Ascending aorta (tissue), 2 donors: ENCODE measurements at regions of chr11 and their contacts with region 1.

Region 1: GRCh38 chr11:66835768-66836405 is 7.4 kb upstream of the RCE1 start:
- DNase-seq: no peak
- H3K4me3 ChIP-seq: no peak overlapping the region
- H3K27ac ChIP-seq: no peak overlapping the region
- H3K4me1 ChIP-seq: no peaks in the 10 kb centered on the region
- H3K27me3 ChIP-seq: no peaks in the 10 kb centered on the region
- CTCF ChIP-seq: no peak

Region 2: DNA sequence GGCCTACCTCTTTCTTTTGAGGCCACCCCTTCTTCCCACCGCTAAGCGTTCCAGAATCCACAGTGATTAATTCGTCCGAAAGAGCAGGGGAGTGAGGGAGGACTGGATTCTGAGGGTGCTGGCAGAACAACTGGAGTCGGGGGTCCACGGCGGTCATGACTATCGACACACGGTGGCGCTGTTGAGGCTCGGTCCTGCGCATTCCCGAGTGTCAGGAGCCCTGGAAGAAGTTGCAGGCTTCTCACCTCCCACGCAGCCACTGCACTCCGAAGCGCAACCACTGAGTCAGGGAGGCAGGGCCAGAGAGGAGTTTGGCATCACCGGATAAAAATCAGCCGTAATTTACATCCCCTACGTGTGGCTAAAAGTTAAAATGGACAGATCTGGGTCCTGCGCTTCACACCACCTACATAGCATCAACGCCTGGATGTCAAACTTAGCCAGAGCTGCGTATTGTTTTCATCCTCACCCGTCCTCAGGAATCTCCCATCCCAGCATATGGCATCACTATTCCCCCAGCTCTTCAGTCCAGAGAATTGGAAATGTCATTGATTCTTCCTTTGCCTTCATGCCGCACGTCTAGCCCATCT is 256.8 kb before region 1 on chr11:
- intact Hi-C with region 1: loop called (anchors 2 kb)
- DNase-seq: peak; percentile 25 to 88
- H3K4me3 ChIP-seq: peak overlapping the region in 1 of 2 donors; percentile 26
- H3K27ac ChIP-seq: no peak overlapping the region
- H3K4me1 ChIP-seq: no peaks in the 10 kb centered on the region
- H3K27me3 ChIP-seq: no peaks in the 10 kb centered on the region
- CTCF ChIP-seq: peak; percentile 85 to 92 (median 92)

Region 3: DNA sequence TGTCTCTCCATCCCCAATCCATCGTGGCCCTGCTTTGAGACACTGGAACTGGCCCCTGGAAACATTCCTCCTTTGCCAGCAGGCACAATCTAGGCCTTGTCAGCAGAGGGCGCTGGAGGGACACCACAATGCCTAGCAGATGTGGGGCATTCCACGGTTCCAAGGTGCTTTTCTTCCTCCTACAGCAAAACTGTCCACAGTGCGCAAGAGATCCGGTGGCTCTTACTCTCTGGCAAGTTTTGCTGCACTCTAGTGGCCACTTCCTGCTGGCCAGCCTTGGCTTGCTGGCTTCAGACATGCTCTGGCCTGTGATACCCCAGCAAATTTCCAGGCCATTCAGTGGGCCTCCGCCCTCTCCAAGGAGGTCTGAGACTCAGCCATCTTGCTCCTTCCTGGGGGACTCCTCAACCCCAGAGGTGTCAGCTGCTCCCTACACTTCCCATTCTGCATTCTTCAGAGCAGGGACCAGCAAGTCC is 141.1 kb before region 1 on chr11:
- intact Hi-C with region 1: loop called (anchors 1 kb)
- DNase-seq: peak; percentile 50 to 92
- H3K4me3 ChIP-seq: no peak overlapping the region
- H3K27ac ChIP-seq: no peak overlapping the region
- H3K4me1 ChIP-seq: no peaks in the 10 kb centered on the region
- H3K27me3 ChIP-seq: no peaks in the 10 kb centered on the region
- CTCF ChIP-seq: peak; percentile 88 to 93 (median 90)